ENCODE measurements at regions of chr19 and their contacts with region 1.

Region 1: DNA sequence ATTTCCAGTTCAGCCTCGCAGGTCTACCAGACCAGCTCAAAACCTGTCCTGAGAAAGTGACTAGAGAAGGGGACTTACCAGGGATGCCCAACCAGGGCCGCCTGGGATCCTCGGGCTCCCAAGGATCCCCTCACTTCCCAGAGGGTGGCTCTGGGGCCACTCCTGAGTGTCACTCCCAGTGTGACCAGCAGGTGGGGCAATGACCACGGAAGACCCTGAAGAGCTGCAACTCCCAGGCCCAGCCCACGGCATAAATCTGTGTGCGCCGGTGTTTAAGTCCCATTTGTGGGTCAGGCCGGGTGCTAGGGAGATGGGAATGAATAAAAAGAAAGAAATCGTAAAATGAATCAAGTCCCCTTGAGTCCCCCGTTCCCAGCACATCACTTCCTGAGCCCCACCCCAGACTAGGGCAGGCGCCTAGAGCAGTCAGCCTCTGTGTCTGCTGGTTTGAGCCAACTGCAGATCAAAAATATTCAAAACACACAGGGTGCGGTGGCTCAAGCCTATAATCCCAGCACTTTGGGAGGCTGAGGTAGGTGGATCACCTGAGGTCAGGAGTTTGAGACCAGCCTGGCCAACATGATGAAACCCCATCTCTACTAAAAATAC is 10.7 kb downstream of the PTGIR start:
- DNase-seq: peak; percentile 83

Region 2: DNA sequence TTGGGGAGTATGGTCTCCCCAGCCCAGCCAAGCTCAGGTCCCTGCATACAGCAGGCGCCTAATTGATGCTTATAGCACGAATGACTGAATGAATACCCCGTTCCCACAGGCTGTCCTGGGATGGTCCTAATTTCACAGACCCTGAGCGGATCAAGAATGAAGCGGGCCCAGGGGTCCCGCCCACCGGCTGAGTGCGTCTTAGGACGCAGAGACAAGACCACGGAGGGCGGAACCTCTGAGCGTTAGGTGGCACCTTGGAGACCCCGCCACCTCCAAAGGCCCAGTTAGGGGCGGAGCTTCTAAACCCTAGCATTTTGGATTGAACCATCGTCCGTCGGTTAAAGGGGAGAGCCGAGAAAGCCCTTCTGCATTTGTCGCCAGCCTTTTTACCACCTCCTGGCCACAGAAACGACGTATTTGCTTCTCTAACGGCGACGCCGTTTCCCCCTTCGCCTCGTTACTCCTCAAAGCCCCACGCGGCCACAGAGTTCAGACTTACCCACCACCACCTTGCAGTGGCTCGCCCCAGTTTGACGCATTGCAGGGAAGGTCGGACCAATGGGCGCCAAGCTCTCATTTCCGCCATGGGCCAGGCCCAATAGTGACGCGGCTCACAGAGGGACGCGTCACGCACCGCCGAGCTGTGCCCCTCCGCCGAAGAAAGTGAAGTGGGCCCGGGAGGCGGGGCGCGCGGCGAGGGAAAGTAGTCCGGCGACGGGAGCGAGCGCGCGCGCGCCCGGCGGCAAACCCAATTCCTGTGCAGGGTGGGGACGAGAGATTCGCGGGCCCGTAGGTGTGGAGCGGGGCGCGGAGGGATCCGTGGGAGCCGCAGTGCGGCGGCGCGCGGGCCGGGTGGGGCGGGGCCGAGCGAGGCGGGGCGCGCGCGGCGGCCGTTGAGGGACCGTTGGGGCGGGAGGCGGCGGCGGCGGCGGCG is 13.6 kb before region 1 on chr19:
- CTCF ChIA-PET with region 1: interaction called, 20 read pairs
- POLR2A ChIA-PET with region 1: interaction called, 40 read pairs
- DNase-seq: peak; percentile 91

Region 3: DNA sequence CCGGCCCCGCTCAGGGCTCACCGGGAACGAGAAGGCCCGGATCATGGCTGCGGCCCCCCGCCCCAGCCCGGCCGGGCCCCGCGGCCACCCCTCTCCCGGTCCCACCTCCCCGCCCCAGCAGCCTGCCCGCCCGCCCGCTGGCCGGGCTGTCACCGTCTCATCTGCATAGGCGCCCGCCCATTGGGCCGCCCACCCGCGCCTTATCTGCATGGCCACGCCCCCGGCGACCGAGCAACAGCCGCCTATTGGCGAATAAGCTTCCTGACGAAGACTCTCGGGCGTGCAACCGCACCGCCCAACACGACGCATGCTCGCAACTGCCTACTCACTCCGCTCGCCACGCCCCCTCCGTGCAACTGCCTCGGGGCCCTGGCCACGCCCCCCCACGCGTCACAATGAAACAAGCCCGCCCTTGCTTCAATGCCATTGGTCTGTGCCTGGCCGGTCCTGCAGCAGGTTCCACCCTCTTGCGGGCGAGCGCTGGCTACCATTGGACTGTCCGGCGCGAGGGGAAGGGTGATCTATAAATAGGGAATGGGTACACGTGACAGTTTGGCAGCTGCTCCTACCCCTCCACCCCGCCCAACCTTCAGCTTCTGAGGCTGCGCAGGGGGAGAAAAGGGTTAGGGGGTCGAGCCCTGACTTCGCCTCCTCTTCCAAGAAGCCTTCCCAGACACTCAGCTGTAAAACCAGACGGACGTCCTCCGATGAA is 47.0 kb after region 1 on chr19 and contains the start of gene DACT3:
- CTCF ChIA-PET with region 1: interaction called, 38 read pairs
- POLR2A ChIA-PET with region 1: interaction called, 6 read pairs
- DNase-seq: peak; percentile 99

Measured in HEK293T (cell line).